ENCODE measurements at regions of chr9 and their contacts with region 1.

Region 1: DNA sequence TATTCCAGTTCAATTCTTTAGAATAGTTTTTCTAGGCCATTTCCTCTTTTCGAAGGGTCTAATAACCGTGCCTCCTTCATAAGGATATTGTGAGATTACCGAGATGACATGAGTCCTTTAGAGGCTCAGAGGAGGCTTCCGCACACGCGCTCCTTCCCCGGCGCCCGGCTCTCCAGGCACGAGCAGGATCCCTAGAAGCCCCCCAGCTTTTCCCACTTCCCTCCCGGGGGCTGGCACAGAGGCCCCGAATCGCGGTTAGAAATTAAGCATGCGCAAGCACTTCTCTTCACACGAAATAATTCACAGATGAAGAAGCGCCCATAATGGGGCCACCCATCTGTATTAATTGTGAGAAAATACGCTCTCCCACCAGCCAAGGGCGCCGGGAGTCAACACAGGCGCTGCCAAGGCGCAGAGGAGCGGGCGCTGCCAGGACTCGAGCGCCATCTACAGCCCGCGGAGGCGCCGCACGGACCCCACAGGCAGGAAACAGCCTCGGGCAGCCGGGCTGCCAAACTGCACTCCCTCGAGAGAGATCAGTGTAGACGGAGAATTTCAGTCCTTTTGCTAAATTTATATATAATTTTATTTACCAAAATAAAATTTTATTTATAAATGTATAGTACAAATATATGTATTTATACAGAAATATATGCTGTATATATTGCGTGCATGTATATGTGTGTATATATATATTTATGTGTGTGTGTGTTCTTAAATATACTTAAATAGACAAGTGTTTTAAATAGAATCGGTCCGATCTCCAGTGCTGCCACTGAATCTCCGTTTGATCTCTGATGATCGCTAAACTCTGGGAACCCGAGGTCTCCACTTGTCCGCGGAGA is 258.1 kb upstream of the NFIL3 start:
- DNase-seq: peak; percentile 68 to 91 (median 82)

Region 2: GRCh38 chr9:90914868-90915483 is 766.7 kb before region 1 on chr9:
- intact Hi-C with region 1: loop called (anchors 10 kb)
- DNase-seq: peak; percentile 45 to 91 (median 78)

Region 3: DNA sequence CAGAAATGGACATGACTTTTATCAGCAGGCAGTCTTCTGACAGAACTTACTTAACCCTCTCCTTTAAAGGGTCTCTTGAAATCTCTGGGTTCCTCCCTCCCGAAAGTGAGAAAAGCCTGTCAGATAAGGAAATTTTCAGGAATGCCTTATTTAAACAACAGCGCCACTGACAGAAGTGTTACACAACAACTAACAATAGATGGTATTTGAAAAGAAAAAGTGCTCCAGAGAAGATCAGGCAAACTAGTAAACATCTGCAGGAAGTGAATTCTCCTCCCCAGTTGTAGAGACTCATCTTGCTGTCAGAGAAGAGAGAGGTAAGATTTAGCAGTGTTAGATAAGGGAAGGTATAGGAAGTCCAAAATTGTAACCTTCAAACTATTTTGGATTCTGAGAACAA is 150.9 kb before region 1 on chr9:
- intact Hi-C with region 1: no loop called
- DNase-seq: no peak

Region 4: GRCh38 chr9:91604451-91605179 is 77.1 kb before region 1 on chr9:
- intact Hi-C with region 1: no loop called
- DNase-seq: no peak

Measured in head of caudate nucleus (tissue), 42 donors.